Dorsolateral prefrontal cortex (tissue), 120 donors: ENCODE measurements at regions of chr21 and their contacts with region 1.

Region 1: DNA sequence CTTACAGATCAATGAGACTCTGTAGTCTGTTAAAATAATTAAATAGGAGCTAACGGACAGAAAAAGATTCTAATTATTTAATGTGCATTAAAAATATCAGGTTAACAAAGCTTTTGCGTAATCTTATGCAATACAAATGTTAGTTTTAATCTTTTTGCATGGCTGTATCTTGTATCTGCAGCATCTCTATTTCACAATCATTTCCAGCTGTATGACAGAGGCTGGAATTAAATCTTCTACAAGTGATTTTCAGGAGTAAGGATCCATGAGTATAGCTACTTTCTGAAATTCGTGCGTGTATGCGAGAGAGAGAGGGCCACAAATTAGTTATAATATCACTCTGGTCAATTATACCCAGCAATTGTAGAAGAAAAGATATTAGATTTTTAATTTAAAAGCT is 1446.8 kb downstream of the NCAM2 start:
- DNase-seq: no peak
- H3K4me3 ChIP-seq: no peak overlapping the region
- H3K27ac ChIP-seq: no peak overlapping the region
- H3K27me3 ChIP-seq: no peaks in the 10 kb centered on the region
- CTCF ChIP-seq: no peak

Region 2: DNA sequence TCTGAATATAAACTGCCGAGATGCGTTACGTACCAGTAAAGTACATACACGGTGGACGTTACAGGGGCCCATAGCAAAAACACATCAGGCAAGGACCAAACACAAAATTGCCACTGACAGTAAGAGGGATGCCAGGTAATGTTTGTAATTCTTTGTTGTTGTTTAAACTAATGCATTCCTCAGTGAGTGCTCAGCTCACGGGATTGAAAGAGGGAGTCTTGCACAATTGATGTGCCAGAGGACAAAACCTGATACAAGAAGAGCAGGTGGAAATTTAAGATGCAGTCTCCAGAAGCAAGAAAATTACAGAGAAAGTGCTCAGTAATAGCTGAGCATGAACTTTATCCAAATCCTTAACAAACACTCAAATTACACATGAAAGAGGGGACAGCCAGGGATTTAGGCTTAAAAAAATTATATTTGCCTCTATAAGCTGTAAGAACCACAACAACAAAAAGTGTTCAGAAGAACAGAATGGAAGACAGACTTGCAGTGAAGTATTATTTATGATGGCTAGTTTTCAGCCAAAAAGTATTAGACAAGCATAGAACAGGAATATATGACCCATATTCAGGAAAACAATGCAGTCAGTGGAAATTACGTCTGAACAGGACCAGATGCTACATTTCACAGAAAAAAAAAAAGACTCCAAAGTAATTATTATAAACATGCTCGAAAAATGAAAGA is 200.6 kb before region 1 on chr21:
- intact Hi-C with region 1: loop called in 1 of 2 experiments (anchors 10 kb)
- DNase-seq: no peak
- H3K4me3 ChIP-seq: no peak overlapping the region
- H3K27ac ChIP-seq: no peak overlapping the region
- H3K27me3 ChIP-seq: no peaks in the 10 kb centered on the region
- CTCF ChIP-seq: no peak

Region 3: GRCh38 chr21:22691658-22692057 is 246.7 kb after region 1 on chr21:
- intact Hi-C with region 1: no loop called
- DNase-seq: no peak
- H3K4me3 ChIP-seq: no peak overlapping the region
- H3K27ac ChIP-seq: peak overlapping the region in 7 of 59 donors; percentile 3 to 52 (median 37)
- H3K27me3 ChIP-seq: no peaks in the 10 kb centered on the region
- CTCF ChIP-seq: no peak